ENCODE measurements at regions of chr3 and their contacts with region 1.

Region 1: GRCh38 chr3:50611464-50612233 is at the start of gene CISH:
- DNase-seq: peak; percentile 98
- ATAC-seq: peak; percentile 77 to 82 (median 80)
- H3K4me3 ChIP-seq: peak within 1 kb of the TSS; percentile 89
- H3K27ac ChIP-seq: peak within 1 kb of the TSS; percentile 91
- H3K4me1 ChIP-seq: peaks cover 52% of the 10 kb centered on the region
- H3K27me3 ChIP-seq: no peaks in the 10 kb centered on the region
- CTCF ChIP-seq: peak; percentile 27
- total RNA-seq, gene CISH: 16.9 to 75.1 (median 50.4) TPM

Region 2: DNA sequence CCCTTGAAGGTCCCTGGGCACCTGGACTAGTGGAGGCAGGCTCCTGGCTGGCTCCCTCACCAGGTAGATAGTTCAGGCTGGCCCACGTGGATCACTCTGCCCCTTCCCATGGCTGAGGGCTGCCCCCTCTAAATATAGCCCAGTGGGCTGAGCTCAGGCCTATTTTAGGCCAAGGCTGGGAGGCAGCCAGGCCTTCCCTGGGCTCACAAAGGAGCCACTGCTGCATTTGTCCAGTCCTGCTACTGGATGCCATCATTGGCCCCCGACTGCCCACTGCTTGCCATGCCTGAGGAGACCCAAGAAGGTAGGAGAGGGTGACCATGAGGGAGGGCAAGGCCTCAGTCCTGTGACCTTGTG is 332.8 kb before region 1 on chr3 and contains the start of gene LSMEM2:
- intact Hi-C with region 1: no loop called
- DNase-seq: peak; percentile 65 to 87
- ATAC-seq: peak; percentile 89 to 94 (median 92)
- H3K4me3 ChIP-seq: peak within 1 kb of the TSS; percentile 60
- H3K27ac ChIP-seq: peak within 1 kb of the TSS; percentile 79
- H3K4me1 ChIP-seq: peaks cover 18% of the 10 kb centered on the region
- H3K27me3 ChIP-seq: peaks cover 0 to 1% (median 0%) of the 10 kb centered on the region in 3 donors
- CTCF ChIP-seq: no peak
- total RNA-seq, gene LSMEM2: 0.84 to 13.1 (median 1.1) TPM

Region 3: GRCh38 chr3:50568947-50569749 is 42.5 kb before region 1 on chr3 and contains the start of gene HEMK1:
- intact Hi-C with region 1: loop called (anchors 1 to 2 kb)
- DNase-seq: peak; percentile 97 to 99
- ATAC-seq: peak; percentile 86 to 90 (median 88)
- H3K4me3 ChIP-seq: peak within 1 kb of the TSS; percentile 81
- H3K27ac ChIP-seq: peak within 1 kb of the TSS; percentile 89
- H3K4me1 ChIP-seq: peaks cover 15% of the 10 kb centered on the region
- H3K27me3 ChIP-seq: no peaks in the 10 kb centered on the region
- CTCF ChIP-seq: no peak
- total RNA-seq, gene HEMK1: 6.1 to 16.2 (median 9.3) TPM

Region 4: DNA sequence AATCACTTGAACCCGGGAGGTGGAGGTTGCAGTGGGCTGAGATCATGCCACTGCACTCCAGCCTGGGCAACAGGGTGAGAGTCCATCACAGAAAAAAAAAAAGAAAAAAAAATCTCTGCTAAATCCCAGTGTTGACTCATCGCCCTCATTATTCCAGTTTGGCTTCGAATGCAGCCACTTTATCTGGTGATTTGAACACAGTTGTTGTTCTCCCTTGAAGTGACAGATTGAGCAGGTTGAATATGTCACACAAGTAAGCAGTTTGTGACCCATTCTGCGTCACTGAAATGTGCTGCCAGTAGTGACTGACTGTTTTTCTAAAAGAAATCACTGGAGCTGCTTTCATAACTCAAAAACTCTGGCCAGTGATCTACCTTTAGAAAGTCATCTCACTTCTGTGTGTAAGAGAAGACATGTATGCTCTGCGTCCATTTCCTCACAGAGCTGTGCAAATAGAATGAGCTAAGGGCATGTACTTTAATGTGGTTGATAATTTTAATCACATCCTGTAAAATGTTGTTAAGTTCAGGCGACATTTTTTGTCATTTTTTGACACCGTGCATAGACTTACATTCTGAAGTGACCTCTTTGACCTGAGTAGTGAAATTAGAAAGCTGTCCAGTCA is 75.6 kb after region 1 on chr3:
- intact Hi-C with region 1: no loop called
- DNase-seq: no peak
- ATAC-seq: peak; percentile 77 to 93 (median 88)
- H3K4me3 ChIP-seq: no peak overlapping the region
- H3K27ac ChIP-seq: no peak overlapping the region
- H3K4me1 ChIP-seq: no peaks in the 10 kb centered on the region
- H3K27me3 ChIP-seq: no peaks in the 10 kb centered on the region
- CTCF ChIP-seq: no peak

Region 5: GRCh38 chr3:51311055-51311454 is 699.4 kb after region 1 on chr3:
- intact Hi-C with region 1: loop called in 1 of 2 experiments (anchors 5 kb)
- DNase-seq: no peak
- ATAC-seq: no peak
- H3K4me3 ChIP-seq: no peak overlapping the region
- H3K27ac ChIP-seq: no peak overlapping the region
- H3K4me1 ChIP-seq: no peaks in the 10 kb centered on the region
- H3K27me3 ChIP-seq: peaks cover 0 to 9% (median 0%) of the 10 kb centered on the region in 3 donors
- CTCF ChIP-seq: no peak

Region 6: GRCh38 chr3:51384726-51385473 is 773.3 kb after region 1 on chr3 and contains the start of gene MANF:
- intact Hi-C with region 1: loop called (anchors 5 to 10 kb)
- DNase-seq: peak; percentile 98 to 99
- ATAC-seq: peak; percentile 98 to 99 (median 99)
- H3K4me3 ChIP-seq: peak within 1 kb of the TSS; percentile 70
- H3K27ac ChIP-seq: peak within 1 kb of the TSS; percentile 86
- H3K4me1 ChIP-seq: peaks cover 23% of the 10 kb centered on the region
- H3K27me3 ChIP-seq: no peaks in the 10 kb centered on the region
- CTCF ChIP-seq: no peak
- total RNA-seq, gene MANF: 12.6 to 24.0 (median 19.3) TPM

Measured in psoas muscle (tissue), 8 donors.